Dendritic cell treated with granulocyte-macrophage colony-stimulating factor and Interleukin-4, amounts not matched to agents 40 ng/mL and 50 ng/mL, for 4 days (primary cell): ENCODE measurements at regions of chr6 and their contacts with region 1.

Region 1: DNA sequence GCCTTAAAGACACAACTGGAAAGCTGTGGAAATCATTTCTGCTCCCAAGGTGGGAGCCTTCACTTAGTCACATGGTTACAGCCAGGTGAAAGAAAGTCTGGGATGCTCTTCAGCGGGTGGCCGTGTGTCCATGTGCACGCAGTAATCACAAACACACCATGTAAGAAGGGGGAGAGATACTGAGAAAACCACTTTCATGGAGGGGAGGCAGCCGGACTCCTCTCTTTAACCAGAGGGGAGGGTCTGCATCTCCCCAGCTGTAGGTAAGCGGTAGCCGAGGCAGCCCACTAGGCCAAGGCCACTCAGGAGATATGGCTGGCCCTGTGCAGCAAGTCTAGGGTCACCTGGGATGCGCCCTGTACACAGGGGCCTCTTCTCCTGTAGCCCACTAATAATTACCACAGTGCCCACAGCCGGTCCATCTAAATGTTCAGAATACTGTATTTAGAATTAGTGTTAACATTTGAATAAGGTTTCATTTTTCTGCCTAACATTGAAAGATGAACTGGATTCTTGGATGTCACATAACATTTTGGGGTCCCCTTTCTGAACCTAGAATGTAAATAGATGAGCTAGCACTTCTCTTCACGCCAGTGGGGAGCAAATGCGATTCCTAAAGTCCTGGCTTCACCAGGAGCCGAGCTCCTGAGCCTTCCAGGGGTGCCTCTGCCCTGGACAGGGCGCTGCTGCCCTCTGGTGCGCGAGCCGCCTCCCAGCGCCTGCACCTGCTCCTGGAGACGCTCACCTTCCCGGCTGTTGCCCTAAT is 15.9 kb downstream of the GPR31 start:
- H3K4me3 Mint-ChIP-seq: no peak overlapping the region
- H3K27ac Mint-ChIP-seq: no peak overlapping the region
- H3K4me1 Mint-ChIP-seq: peaks cover 12% of the 10 kb centered on the region
- H3K27me3 Mint-ChIP-seq: peaks cover 9% of the 10 kb centered on the region

Region 2: GRCh38 chr6:166032366-166033171 is 1109.3 kb before region 1 on chr6:
- intact Hi-C with region 1: no loop called
- H3K4me3 Mint-ChIP-seq: no peak overlapping the region
- H3K27ac Mint-ChIP-seq: no peak overlapping the region
- H3K4me1 Mint-ChIP-seq: no peaks in the 10 kb centered on the region
- H3K27me3 Mint-ChIP-seq: no peaks in the 10 kb centered on the region

Region 3: GRCh38 chr6:166775180-166776081 is 366.4 kb before region 1 on chr6:
- intact Hi-C with region 1: loop called (anchors 2 kb)
- H3K4me3 Mint-ChIP-seq: no peak overlapping the region
- H3K27ac Mint-ChIP-seq: no peak overlapping the region
- H3K4me1 Mint-ChIP-seq: peaks cover 7% of the 10 kb centered on the region
- H3K27me3 Mint-ChIP-seq: peaks cover 18% of the 10 kb centered on the region

Region 4: DNA sequence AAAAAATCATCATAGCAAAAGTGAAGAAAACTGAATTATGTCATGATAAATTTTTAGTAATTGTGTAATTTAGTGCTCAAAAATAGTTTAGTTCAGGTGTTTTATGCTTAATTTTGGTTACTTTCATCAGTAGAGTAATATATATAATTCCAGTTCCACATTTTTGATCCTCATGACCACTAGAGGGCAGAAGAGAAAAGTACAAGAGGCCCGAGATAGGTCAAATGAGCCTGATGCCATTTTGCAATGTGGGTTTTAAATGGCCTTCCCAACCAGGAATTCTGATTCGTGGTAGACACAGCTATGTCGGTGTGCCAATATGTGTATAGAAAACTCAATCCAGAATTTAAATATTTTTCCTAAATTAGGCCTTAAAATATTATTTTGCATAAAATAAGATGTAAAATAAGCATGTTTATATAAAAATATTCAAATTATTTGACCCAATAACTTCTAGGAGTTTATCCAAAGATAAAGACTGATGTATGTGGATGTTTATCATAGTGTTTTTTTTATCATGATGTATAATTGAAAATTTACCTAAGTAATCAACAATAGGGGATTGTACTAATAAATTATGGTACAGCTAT is 355.1 kb before region 1 on chr6:
- intact Hi-C with region 1: loop called (anchors 2 kb)
- H3K4me3 Mint-ChIP-seq: no peak overlapping the region
- H3K27ac Mint-ChIP-seq: no peak overlapping the region
- H3K4me1 Mint-ChIP-seq: no peaks in the 10 kb centered on the region
- H3K27me3 Mint-ChIP-seq: peaks cover 7% of the 10 kb centered on the region

Region 5: DNA sequence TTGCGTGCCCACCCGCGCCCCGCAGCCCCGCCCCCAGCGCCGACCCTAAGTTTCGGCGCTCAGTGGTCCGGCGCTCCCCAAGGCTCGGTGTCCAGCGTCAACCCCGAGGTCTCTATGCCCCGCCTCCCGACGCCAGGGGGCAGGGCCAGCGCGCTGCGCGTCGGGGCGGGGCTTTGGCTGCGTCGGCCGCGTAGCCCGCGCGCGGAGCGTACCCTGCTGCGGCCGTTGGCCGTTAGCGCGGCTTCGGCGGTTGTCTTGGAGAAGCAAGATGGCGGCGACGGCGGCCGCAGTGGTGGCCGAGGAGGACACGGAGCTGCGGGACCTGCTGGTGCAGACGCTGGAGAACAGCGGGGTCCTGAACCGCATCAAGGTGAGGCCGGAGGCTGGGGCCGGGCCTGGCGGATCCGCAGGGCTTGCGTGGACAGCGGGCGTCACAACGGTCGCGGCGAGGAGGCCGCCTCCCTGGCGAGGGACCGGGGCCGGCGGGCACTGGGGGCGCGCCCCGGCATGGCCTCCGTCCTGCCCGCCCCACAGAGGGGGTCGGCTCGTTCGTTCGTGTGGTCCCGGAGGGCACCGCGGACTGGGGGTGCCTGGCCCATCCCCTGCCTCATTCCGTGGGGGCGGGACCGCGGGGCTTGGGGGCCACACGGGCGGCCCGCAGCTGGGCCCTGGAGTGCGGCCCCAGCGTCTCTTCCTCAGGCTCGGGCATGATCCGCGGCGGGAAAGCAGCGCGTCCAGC is 142.5 kb before region 1 on chr6 and contains the start of gene CEP43:
- intact Hi-C with region 1: loop called (anchors 1 kb)
- H3K4me3 Mint-ChIP-seq: peak within 1 kb of the TSS; percentile 88
- H3K27ac Mint-ChIP-seq: peak within 1 kb of the TSS; percentile 76
- H3K4me1 Mint-ChIP-seq: peaks cover 32% of the 10 kb centered on the region
- H3K27me3 Mint-ChIP-seq: no peaks in the 10 kb centered on the region

Region 6: GRCh38 chr6:167045835-167046580 is 95.8 kb before region 1 on chr6:
- intact Hi-C with region 1: no loop called
- H3K4me3 Mint-ChIP-seq: peak overlapping the region; percentile 40
- H3K27ac Mint-ChIP-seq: peak overlapping the region; percentile 87
- H3K4me1 Mint-ChIP-seq: peaks cover 46% of the 10 kb centered on the region
- H3K27me3 Mint-ChIP-seq: no peaks in the 10 kb centered on the region